ENCODE measurements at regions of chr20 and their contacts with region 1.

Region 1: DNA sequence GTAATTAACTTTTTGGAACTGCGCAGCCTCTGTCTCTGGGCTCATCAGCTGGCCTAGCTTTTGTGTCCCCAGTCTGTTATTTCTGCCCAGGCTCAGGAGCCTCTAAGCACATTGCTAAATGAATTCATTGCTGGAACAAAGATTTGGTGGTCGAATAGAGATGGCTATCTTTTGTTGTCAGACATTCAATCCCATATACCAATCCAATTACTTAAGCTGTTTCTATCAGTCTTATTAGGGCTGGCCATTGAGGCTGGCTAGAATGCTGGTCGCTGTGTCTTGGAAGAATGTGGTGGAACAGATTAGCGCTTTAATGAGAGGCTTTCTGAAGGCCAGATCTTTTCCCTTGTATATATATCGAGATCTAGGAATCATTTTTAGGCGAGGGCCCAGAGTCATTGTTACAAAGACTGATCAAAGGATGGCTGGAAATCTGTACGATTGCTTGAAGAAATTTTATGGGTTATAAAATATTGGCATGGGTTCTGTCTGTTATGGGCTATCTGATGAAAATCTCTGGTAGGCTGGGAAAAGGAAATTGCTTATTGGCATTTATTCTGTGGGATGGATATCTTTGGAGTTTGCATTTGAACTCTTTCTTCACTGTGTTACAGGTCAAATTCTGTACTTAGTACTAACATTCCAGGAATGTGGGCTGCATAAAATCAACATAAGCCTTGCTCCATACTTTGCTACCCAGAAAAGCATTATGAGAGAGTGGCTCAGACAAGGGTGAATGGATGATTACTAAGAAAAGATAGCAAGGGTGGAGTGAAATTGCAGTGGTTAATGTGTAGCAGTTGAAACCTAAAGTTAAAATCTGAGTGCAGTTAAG is 34.8 kb upstream of the JAG1 start:
- DNase-seq: peak; percentile 99
- ATAC-seq: peak; percentile 88
- H3K4me3 ChIP-seq: peak overlapping the region in 1 of 3 experiments; percentile 32; a peak in 1 of 6 replicates
- H3K27ac ChIP-seq: peak overlapping the region; percentile 93
- H3K4me1 ChIP-seq: peaks cover 88% of the 10 kb centered on the region
- H3K27me3 ChIP-seq: no peaks in the 10 kb centered on the region
- CTCF ChIP-seq: 0 out of 2 replicates have a peak, but pooled peaks have one; percentile 4
- EP300 ChIP-seq: peak; percentile 98 to 99
- POLR2A ChIP-seq: no peak
- RAD21 ChIP-seq: peak; percentile 57; the same call in 1 of the 2 replicates

Region 2: GRCh38 chr20:10558635-10559187 is 149.9 kb before region 1 on chr20:
- CTCF ChIA-PET with region 1: no interaction called
- POLR2A ChIA-PET with region 1: no interaction called
- in situ Hi-C with region 1: no loop called
- intact Hi-C with region 1: loop called (anchors 5 kb)
- DNase-seq: no peak
- ATAC-seq: no peak
- H3K4me3 ChIP-seq: no peak overlapping the region
- H3K27ac ChIP-seq: peak overlapping the region; percentile 4
- H3K4me1 ChIP-seq: peaks cover 73% of the 10 kb centered on the region
- H3K27me3 ChIP-seq: no peaks in the 10 kb centered on the region
- CTCF ChIP-seq: no peak
- EP300 ChIP-seq: no peak
- POLR2A ChIP-seq: no peak
- RAD21 ChIP-seq: no peak

Region 3: GRCh38 chr20:10689385-10689784 is 19.2 kb before region 1 on chr20:
- CTCF ChIA-PET with region 1: no interaction called
- POLR2A ChIA-PET with region 1: no interaction called
- in situ Hi-C with region 1: no loop called
- intact Hi-C with region 1: no loop called
- DNase-seq: no peak
- ATAC-seq: peak; percentile 32; the same call in 2 of the 3 replicates
- H3K4me3 ChIP-seq: no peak overlapping the region
- H3K27ac ChIP-seq: no peak overlapping the region
- H3K4me1 ChIP-seq: peaks cover 37% of the 10 kb centered on the region
- H3K27me3 ChIP-seq: no peaks in the 10 kb centered on the region
- CTCF ChIP-seq: no peak
- EP300 ChIP-seq: no peak
- POLR2A ChIP-seq: no peak
- RAD21 ChIP-seq: no peak

Region 4: DNA sequence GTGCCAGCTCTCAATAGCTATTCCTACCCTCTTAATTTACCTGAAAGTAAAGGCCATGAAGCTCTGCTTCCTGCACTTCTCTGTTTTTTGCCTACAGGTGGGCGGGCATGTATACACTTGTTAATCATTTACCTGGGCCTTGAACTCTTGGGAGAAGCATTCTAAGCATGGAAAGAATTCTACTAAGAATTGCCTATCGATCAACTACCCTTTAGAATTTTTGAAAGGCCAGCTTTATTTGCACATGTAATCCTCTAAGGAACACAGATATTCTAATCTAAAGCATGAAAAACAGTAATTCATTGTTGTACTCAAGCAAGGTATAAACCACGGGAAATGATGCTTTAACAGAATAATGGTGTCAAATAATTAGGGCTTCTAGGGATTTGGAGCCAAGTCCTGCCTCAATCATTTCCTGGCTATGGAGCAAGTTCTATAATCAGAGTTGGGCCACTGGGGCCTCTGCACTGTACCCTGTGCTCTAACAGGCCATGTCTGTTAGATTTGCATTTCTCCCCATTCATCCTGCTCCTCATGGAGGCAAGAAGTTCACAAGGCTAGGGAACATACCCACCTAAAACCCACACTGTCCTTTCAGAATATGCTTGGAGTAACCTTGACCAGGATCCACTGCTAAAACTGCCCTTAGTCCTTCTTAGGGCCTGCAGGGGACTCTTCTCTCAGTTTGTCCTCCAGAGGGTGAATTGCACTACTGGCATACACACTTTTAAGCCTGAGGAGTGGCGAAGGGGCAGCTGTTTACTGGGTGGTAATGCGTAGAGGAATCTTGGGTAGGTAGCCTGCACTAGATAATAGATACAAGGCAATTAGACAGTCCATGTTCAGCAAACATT is 241.6 kb after region 1 on chr20:
- CTCF ChIA-PET with region 1: no interaction called
- POLR2A ChIA-PET with region 1: interaction called, 4 read pairs
- in situ Hi-C with region 1: no loop called
- intact Hi-C with region 1: loop called (anchors 1 kb)
- DNase-seq: peak; percentile 89
- ATAC-seq: peak; percentile 96
- H3K4me3 ChIP-seq: peak overlapping the region in 1 of 3 experiments; percentile 1; a peak in 1 of 6 replicates
- H3K27ac ChIP-seq: peak overlapping the region; percentile 57
- H3K4me1 ChIP-seq: peaks cover 30% of the 10 kb centered on the region
- H3K27me3 ChIP-seq: no peaks in the 10 kb centered on the region
- CTCF ChIP-seq: peak; percentile 15; the same call in 1 of the 2 replicates
- EP300 ChIP-seq: peak in 1 of 2 experiments; percentile 87; a peak in 2 of 4 replicates
- POLR2A ChIP-seq: no peak
- RAD21 ChIP-seq: no peak

Measured in HepG2 (cell line).